CD8-positive, alpha-beta memory T cell (primary cell): ENCODE measurements at regions of chr16 and their contacts with region 1.

Region 1: GRCh38 chr16:19502395-19503131 is 19.3 kb downstream of the GDE1 start:
- DNase-seq: peak; percentile 35 to 61 (median 46)
- H3K4me3 ChIP-seq: no peak overlapping the region
- H3K4me3 Mint-ChIP-seq: no peak overlapping the region
- H3K27ac ChIP-seq: no peak overlapping the region
- H3K27ac Mint-ChIP-seq: no peak overlapping the region
- H3K4me1 ChIP-seq: no peaks in the 10 kb centered on the region
- H3K4me1 Mint-ChIP-seq: no peaks in the 10 kb centered on the region
- H3K27me3 ChIP-seq: no peaks in the 10 kb centered on the region
- H3K27me3 Mint-ChIP-seq: no peaks in the 10 kb centered on the region

Region 2: DNA sequence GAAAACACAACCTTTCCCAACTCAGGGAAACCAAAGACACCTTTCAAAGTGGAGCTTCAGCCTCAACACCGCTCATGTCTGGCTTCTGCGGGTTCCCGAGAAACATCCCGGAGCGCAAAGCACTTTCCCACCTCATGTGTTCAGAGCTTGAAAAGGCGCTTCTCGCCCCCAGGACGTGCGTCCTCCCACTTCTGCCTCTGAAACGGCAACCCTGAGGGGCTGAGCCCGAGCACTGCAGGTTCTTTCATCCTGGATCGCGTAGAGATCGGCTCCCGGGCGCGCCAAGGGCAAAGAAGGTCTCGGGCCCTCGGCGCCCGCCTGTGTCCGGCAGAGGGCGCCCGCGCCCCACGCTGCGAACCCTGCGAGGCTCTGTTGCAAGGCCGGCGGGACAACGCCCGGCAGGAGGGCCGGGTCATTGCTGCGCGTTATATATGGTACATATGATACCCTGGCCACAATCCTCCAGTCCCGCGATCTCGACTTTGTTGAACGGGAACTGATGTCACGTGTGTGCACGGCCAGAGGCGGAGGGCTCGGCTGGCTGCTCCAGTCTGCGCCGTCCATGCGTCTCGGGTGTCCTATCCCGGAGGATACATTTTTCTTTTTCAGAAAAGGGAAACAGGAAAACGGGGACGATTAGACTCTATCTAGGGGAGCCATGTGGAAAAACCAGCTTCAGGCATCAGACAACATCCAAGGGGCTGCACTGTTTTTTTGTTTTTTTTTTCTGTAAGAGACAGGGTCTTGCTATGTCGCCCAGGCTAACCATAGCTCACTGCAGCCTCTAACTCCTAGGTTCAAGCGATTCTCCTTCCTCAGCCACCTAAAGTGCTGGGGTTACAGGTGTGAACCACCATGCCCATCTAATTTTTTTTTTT is 416.0 kb before region 1 on chr16:
- CTCF ChIA-PET with region 1: interaction called, 38 read pairs
- POLR2A ChIA-PET with region 1: no interaction called
- DNase-seq: peak; percentile 62 to 74 (median 66)
- H3K4me3 ChIP-seq: peak overlapping the region; percentile 46
- H3K4me3 Mint-ChIP-seq: peak overlapping the region in 6 of 7 donors; percentile 29 to 68 (median 64)
- H3K27ac ChIP-seq: no peak overlapping the region
- H3K27ac Mint-ChIP-seq: no peak overlapping the region
- H3K4me1 ChIP-seq: peaks cover 11% of the 10 kb centered on the region
- H3K4me1 Mint-ChIP-seq: peaks cover 2 to 7% (median 7%) of the 10 kb centered on the region in 3 donors
- H3K27me3 ChIP-seq: peaks cover 7% of the 10 kb centered on the region
- H3K27me3 Mint-ChIP-seq: peaks cover 3 to 8% of the 10 kb centered on the region in 2 donors

Region 3: GRCh38 chr16:19458718-19459379 is 43.7 kb before region 1 on chr16:
- CTCF ChIA-PET with region 1: no interaction called
- POLR2A ChIA-PET with region 1: no interaction called
- DNase-seq: no peak
- H3K4me3 ChIP-seq: no peak overlapping the region
- H3K4me3 Mint-ChIP-seq: no peak overlapping the region
- H3K27ac ChIP-seq: no peak overlapping the region
- H3K27ac Mint-ChIP-seq: no peak overlapping the region
- H3K4me1 ChIP-seq: no peaks in the 10 kb centered on the region
- H3K4me1 Mint-ChIP-seq: peaks cover 0 to 1% (median 0%) of the 10 kb centered on the region in 3 donors
- H3K27me3 ChIP-seq: no peaks in the 10 kb centered on the region
- H3K27me3 Mint-ChIP-seq: peaks cover 7 to 19% of the 10 kb centered on the region in 2 donors

Region 4: GRCh38 chr16:19528666-19529065 is 26.1 kb after region 1 on chr16:
- CTCF ChIA-PET with region 1: no interaction called
- POLR2A ChIA-PET with region 1: no interaction called
- DNase-seq: no peak
- H3K4me3 ChIP-seq: no peak overlapping the region
- H3K4me3 Mint-ChIP-seq: no peak overlapping the region
- H3K27ac ChIP-seq: no peak overlapping the region
- H3K27ac Mint-ChIP-seq: peak overlapping the region in 1 of 8 donors; percentile 9
- H3K4me1 ChIP-seq: peaks cover 9% of the 10 kb centered on the region
- H3K4me1 Mint-ChIP-seq: peaks cover 16 to 21% (median 19%) of the 10 kb centered on the region in 3 donors
- H3K27me3 ChIP-seq: no peaks in the 10 kb centered on the region
- H3K27me3 Mint-ChIP-seq: no peaks in the 10 kb centered on the region

Region 5: GRCh38 chr16:19636436-19637270 is 134.1 kb after region 1 on chr16:
- CTCF ChIA-PET with region 1: no interaction called
- POLR2A ChIA-PET with region 1: no interaction called
- DNase-seq: no peak
- H3K4me3 ChIP-seq: no peak overlapping the region
- H3K4me3 Mint-ChIP-seq: no peak overlapping the region
- H3K27ac ChIP-seq: no peak overlapping the region
- H3K27ac Mint-ChIP-seq: no peak overlapping the region
- H3K4me1 ChIP-seq: peaks cover 13% of the 10 kb centered on the region
- H3K4me1 Mint-ChIP-seq: peaks cover 12 to 18% (median 16%) of the 10 kb centered on the region in 3 donors
- H3K27me3 ChIP-seq: no peaks in the 10 kb centered on the region
- H3K27me3 Mint-ChIP-seq: no peaks in the 10 kb centered on the region

Region 6: GRCh38 chr16:19802612-19803011 is 300.0 kb after region 1 on chr16:
- CTCF ChIA-PET with region 1: no interaction called
- POLR2A ChIA-PET with region 1: no interaction called
- DNase-seq: no peak
- H3K4me3 ChIP-seq: no peak overlapping the region
- H3K4me3 Mint-ChIP-seq: no peak overlapping the region
- H3K27ac ChIP-seq: no peak overlapping the region
- H3K27ac Mint-ChIP-seq: no peak overlapping the region
- H3K4me1 ChIP-seq: peaks cover 14% of the 10 kb centered on the region
- H3K4me1 Mint-ChIP-seq: peaks cover 10 to 15% (median 12%) of the 10 kb centered on the region in 3 donors
- H3K27me3 ChIP-seq: no peaks in the 10 kb centered on the region
- H3K27me3 Mint-ChIP-seq: no peaks in the 10 kb centered on the region